ENCODE measurements at regions of chr17 and their contacts with region 1.

Region 1: DNA sequence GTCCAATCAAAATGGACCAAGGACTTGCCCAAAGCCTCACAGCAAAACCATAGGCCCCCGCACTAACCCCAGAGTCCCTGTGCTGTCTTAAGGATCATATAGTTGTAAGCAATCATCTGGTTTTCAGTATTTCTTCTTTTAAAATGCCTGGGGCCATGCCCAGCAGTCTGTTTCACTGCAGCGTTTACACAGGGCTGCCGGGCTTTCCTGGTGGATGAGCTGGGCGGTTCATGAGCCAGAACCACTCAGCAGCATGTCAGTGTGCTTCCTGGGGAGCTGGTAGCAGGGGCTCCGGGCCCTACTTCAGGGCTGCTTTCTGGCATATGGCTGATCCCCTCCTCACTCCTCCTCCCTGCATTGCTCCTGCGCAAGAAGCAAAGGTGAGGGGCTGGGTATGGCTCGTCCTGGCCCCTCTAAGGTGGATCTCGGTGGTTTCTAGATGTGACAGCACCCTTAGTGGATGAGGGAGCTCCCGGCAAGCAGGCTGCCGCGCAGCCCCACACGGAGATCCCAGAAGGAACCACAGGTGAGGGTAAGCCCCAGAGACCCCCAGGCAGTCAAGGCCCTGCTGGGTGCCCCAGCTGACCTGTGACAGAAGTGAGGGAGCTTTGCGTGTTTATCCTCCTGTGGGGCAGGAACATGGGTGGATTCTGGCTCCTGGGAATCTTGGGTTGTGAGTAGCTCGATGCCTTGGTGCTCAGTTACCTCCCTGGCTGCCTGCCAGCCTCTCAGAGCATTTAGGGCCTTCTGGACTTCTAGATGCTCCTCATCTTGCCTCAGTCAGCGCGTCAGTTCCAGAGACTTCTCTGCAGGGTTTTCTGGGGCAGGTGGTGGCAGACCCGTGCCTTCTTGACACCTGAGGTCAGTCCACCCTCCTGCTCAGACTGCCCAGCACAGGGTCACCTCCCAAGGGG is 24.8 kb upstream of the STH start:
- DNase-seq: no peak
- ATAC-seq: no peak
- H3K4me3 Mint-ChIP-seq: peak overlapping the region; percentile 32
- H3K27ac Mint-ChIP-seq: peak overlapping the region; percentile 88
- H3K4me1 Mint-ChIP-seq: peaks cover 31% of the 10 kb centered on the region
- H3K27me3 Mint-ChIP-seq: peaks cover 8% of the 10 kb centered on the region
- CTCF ChIP-seq: no peak

Region 2: GRCh38 chr17:45948881-45949624 is 25.1 kb before region 1 on chr17:
- CTCF ChIA-PET with region 1: interaction called, 8 read pairs
- POLR2A ChIA-PET with region 1: interaction called, 10 read pairs
- intact Hi-C with region 1: loop called (anchors 2 kb)
- DNase-seq: peak; percentile 65
- ATAC-seq: peak; percentile 97
- H3K4me3 Mint-ChIP-seq: peak overlapping the region; percentile 72
- H3K27ac Mint-ChIP-seq: no peak overlapping the region
- H3K4me1 Mint-ChIP-seq: peaks cover 4% of the 10 kb centered on the region
- H3K27me3 Mint-ChIP-seq: peaks cover 38% of the 10 kb centered on the region
- CTCF ChIP-seq: no peak